ENCODE measurements at regions of chr3 and their contacts with region 1.

Region 1: DNA sequence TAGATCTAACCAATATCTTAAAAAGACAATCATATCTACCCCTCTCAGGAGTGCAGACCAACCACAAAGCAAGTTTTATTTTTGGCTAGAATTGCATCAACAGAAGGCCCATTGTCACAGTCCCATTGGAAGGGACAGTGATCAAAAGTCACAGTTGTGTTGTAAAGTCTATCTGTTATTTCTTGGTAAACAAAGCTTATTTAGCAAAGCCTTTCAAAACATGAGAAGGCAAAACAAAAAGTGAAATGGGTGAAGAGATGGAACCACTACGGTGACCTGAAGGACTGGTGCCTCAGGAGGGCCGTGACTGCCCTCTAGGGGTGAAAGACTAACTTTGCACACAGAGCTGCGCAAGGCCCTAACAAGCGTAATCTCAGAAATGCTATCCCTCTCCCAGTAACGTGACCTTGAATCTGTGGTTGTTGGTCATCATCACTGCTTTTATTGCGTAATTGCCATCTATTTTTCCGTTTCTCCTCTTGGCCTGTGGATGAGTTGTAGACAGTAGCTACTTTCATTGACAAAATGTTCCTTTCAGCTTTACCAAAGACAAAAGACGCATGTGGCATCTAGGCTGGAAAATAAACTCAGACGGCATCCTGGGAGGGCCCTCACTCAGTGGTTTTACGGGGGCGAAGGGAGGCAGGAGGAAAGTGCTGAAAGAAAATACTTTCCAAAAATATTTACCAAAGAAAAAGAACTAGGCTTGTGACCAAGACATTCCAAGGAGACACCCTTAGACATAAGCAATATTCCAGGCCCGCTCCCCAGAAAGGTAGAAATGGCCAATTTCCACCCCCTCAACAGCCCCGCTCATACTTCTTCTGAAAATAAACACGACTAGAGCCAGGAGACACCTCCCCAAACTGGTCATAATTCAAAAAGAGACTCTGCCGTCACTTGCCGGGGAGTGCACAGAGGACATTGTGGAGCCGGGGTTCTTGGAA is 79.4 kb downstream of the FRMD4B start:
- DNase-seq: peak; percentile 84
- ATAC-seq: peak; percentile 97
- H3K4me3 Mint-ChIP-seq: peak overlapping the region; percentile 52
- H3K27ac Mint-ChIP-seq: peak overlapping the region; percentile 81
- H3K4me1 Mint-ChIP-seq: peaks cover 19% of the 10 kb centered on the region
- H3K27me3 Mint-ChIP-seq: peaks cover 6% of the 10 kb centered on the region

Region 2: DNA sequence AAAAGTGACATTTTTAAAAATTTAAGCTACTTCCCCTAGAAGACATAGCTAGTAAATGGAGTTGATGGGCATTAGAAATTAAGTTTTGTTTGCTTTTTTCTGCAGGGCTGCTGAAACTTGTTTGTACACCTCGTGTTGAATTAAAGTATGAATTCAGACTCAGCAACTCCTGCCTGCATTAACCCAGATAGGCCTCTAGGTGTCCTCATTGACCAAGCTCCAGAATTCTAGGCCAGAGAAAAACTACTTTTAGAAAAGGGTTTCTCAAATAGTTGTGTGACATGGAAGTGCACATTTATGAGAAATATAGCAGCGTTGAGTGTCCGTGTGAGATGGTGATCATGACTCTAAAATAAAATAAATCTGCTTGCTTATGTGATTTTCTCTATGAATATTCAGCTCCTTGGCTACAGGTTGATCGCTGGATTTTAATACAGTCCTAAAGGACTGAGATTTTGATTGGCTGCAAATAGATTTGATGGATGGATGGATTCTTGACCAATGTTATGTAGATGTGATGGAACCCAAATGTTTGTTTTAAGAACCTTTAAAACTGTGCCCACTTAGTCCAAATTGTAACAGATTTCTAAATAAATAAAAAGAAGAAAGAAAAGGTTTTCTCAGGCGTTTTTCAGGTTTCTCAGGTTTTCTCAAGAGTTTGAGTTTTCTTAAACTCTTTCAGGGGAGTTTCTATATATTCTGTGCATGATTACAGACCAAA is 144.8 kb before region 1 on chr3:
- CTCF ChIA-PET with region 1: interaction called, 291 read pairs
- DNase-seq: peak; percentile 53
- ATAC-seq: peak; percentile 69
- H3K4me3 Mint-ChIP-seq: no peak overlapping the region
- H3K27ac Mint-ChIP-seq: peak overlapping the region; percentile 11
- H3K4me1 Mint-ChIP-seq: peaks cover 18% of the 10 kb centered on the region
- H3K27me3 Mint-ChIP-seq: no peaks in the 10 kb centered on the region

Region 3: GRCh38 chr3:69182588-69183316 is 123.8 kb before region 1 on chr3:
- CTCF ChIA-PET with region 1: interaction called, 11 read pairs
- DNase-seq: no peak
- ATAC-seq: peak; percentile 23
- H3K4me3 Mint-ChIP-seq: no peak overlapping the region
- H3K27ac Mint-ChIP-seq: peak overlapping the region; percentile 35
- H3K4me1 Mint-ChIP-seq: peaks cover 37% of the 10 kb centered on the region
- H3K27me3 Mint-ChIP-seq: no peaks in the 10 kb centered on the region

Region 4: GRCh38 chr3:69200384-69201068 is 106.0 kb before region 1 on chr3:
- CTCF ChIA-PET with region 1: interaction called, 38 read pairs
- DNase-seq: peak; percentile 81
- ATAC-seq: peak; percentile 40
- H3K4me3 Mint-ChIP-seq: peak overlapping the region; percentile 98
- H3K27ac Mint-ChIP-seq: peak overlapping the region; percentile 96
- H3K4me1 Mint-ChIP-seq: peaks cover 75% of the 10 kb centered on the region
- H3K27me3 Mint-ChIP-seq: no peaks in the 10 kb centered on the region

Region 5: DNA sequence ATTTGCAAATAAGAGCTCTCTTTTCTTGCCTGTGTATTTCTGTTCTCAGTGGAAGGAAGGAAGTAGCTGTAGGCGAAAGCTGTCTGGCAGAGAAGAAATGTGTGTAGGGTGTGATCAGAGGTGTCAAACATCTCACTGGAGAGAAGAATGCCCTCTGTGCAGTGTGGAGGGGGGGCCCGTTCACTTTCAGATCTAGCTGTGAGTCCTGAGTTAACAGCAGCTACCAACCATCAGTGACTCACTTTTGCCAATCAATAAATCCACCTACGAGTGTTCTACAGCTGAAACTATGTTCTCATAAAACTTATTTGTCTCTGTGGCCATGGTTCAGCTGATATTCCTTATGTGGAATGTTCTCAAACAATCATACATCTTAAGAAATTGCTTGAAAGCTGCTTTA is 24.3 kb before region 1 on chr3:
- CTCF ChIA-PET with region 1: interaction called, 15 read pairs
- DNase-seq: peak; percentile 77
- ATAC-seq: peak; percentile 98
- H3K4me3 Mint-ChIP-seq: no peak overlapping the region
- H3K27ac Mint-ChIP-seq: peak overlapping the region; percentile 71
- H3K4me1 Mint-ChIP-seq: peaks cover 13% of the 10 kb centered on the region
- H3K27me3 Mint-ChIP-seq: no peaks in the 10 kb centered on the region

Region 6: DNA sequence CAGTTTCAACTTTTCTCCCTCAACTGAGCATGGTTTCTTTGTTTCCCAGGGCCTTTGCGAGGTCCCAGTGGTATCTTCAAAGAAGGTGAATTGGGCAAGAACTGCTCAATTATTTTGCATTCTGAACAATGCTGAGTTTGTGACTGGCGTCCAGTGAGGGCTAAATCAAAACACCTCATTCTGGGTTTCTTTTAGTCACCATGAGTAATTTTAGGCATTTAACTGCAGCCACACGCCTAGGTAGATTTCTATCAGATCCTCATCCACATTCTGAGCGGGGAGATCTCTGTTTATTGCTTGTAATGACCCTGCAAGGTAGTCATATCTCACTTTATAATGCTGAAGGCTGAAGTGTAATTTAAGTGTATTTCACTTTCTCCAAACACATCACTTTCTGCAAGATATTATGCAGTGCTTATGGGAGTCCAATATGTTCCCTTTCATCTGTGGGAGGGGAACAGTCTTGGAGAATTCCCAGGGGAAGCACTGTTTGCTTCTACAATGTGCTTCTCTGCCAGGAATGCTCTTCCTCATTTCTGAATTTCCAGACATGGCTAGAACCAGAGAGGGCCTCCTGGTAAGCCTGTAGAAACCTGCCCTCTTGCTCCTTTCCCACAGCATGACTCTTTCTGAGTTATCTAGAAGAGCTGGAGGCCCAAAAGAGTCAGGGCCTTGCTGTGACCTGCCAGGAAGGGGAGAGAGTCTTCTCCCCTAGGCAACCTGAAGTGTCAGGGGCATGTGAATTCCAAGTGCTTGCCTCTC is 12.3 kb before region 1 on chr3:
- CTCF ChIA-PET with region 1: interaction called, 12 read pairs
- DNase-seq: no peak
- ATAC-seq: no peak
- H3K4me3 Mint-ChIP-seq: no peak overlapping the region
- H3K27ac Mint-ChIP-seq: no peak overlapping the region
- H3K4me1 Mint-ChIP-seq: peaks cover 7% of the 10 kb centered on the region
- H3K27me3 Mint-ChIP-seq: peaks cover 9% of the 10 kb centered on the region

Region 7: GRCh38 chr3:69370156-69370883 is 63.8 kb after region 1 on chr3:
- CTCF ChIA-PET with region 1: no interaction called
- DNase-seq: no peak
- ATAC-seq: no peak
- H3K4me3 Mint-ChIP-seq: no peak overlapping the region
- H3K27ac Mint-ChIP-seq: no peak overlapping the region
- H3K4me1 Mint-ChIP-seq: peaks cover 16% of the 10 kb centered on the region
- H3K27me3 Mint-ChIP-seq: peaks cover 16% of the 10 kb centered on the region

Region 8: DNA sequence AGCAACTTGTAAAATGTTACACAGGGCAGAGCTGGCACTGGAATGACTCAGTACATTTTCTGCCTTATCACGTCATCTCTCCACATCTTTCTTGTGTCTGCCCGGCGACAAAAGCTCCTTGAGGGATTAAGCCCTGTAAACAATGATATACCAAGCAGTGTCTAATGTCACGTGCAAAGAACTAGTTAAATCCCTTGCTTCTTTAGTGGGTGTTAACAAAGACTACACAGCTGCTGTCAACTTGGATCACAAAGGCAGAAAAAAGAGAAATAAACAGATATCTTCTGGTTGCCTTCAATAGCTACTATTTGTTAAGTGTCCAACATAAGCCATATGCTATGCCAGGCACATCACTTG is 127.4 kb after region 1 on chr3:
- CTCF ChIA-PET with region 1: no interaction called
- DNase-seq: no peak
- ATAC-seq: peak; percentile 45
- H3K4me3 Mint-ChIP-seq: no peak overlapping the region
- H3K27ac Mint-ChIP-seq: no peak overlapping the region
- H3K4me1 Mint-ChIP-seq: peaks cover 11% of the 10 kb centered on the region
- H3K27me3 Mint-ChIP-seq: peaks cover 18% of the 10 kb centered on the region

Region 9: DNA sequence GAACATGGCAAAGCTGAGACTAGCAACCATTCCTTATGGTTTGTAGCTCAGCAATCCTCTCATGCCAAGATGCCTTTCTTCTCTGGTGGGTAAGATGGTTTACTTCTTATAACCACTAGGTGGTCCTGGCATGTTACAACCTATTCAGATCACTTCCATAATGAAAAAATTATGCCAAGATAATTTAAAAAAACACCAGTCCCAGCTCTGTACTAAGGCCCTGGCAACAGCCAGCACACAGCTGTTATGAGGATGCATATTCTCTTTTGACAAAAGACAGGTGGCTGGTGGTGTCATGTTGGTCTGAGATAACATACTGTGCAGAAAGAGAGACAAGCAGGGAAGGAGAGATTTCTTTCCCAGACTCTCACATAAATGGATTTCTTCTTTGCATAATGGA is 145.1 kb after region 1 on chr3:
- CTCF ChIA-PET with region 1: no interaction called
- DNase-seq: no peak
- ATAC-seq: no peak
- H3K4me3 Mint-ChIP-seq: no peak overlapping the region
- H3K27ac Mint-ChIP-seq: no peak overlapping the region
- H3K4me1 Mint-ChIP-seq: no peaks in the 10 kb centered on the region
- H3K27me3 Mint-ChIP-seq: peaks cover 12% of the 10 kb centered on the region